ENCODE measurements at regions of chr16 and their contacts with region 1.

Region 1: GRCh38 chr16:70359552-70359951 is 12.8 kb downstream of the DDX19A start:
- DNase-seq: no peak
- H3K4me3 ChIP-seq: no peak overlapping the region
- H3K27ac ChIP-seq: no peak overlapping the region
- H3K4me1 ChIP-seq: no peaks in the 10 kb centered on the region
- H3K27me3 ChIP-seq: no peaks in the 10 kb centered on the region
- CTCF ChIP-seq: no peak

Region 2: DNA sequence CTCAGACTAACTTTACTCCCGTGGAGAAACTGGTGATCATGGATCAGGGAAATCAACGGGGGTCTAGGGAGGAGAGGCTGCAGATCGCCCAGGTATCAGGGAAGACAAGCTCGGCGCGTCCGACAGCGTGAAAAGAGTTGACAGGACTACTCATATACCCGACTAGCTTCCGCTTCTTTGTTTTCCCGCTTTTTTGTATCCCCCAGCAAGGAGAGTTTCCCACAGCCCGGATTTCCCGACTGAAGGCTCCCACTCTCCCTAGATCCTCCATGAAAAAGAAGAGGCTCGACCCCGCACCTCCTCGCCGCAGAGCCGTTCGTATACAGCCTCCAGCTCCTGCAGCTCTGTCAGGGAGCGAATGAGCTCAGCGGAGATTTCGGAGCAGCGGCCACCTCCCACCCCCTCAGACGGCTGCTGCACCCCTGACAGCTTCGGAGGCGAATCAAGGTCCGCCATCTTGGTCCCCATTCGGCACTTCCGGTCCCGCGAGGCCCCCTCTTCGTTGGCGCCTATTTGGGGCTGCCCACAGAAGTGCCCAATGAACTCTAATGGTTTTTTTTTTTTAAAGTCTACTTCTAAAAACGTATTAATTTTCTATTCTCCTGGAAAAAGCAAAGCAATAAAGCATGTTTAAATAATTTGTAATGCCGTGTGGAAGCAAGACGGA is 163.7 kb after region 1 on chr16 and contains the start of gene COG4:
- CTCF ChIA-PET with region 1: no interaction called
- POLR2A ChIA-PET with region 1: interaction called, 11 read pairs
- intact Hi-C with region 1: no loop called
- DNase-seq: peak; percentile 92
- H3K4me3 ChIP-seq: peak within 1 kb of the TSS; percentile 67
- H3K27ac ChIP-seq: peak within 1 kb of the TSS; percentile 93
- H3K4me1 ChIP-seq: peaks cover 27% of the 10 kb centered on the region
- H3K27me3 ChIP-seq: no peaks in the 10 kb centered on the region
- CTCF ChIP-seq: no peak
- total RNA-seq, gene COG4: 68.6 and 82.4 TPM in 2 replicates

Measured in A673 (cell line).